T-cell (primary cell): ENCODE measurements at regions of chr13 and their contacts with region 1.

Region 1: GRCh38 chr13:99288089-99288488 is 19.1 kb downstream of the GPR183 start:
- DNase-seq: peak in 1 of 35 experiments; percentile 36
- ATAC-seq: no peak
- H3K4me3 ChIP-seq: no peak overlapping the region
- H3K4me3 Mint-ChIP-seq: peak overlapping the region in 1 of 3 donors; percentile 20
- H3K27ac ChIP-seq: peak overlapping the region; percentile 52
- H3K27ac Mint-ChIP-seq: peak overlapping the region; percentile 89
- H3K4me1 ChIP-seq: peaks cover 26 to 67% of the 10 kb centered on the region in 2 experiments
- H3K4me1 Mint-ChIP-seq: peaks cover 90 to 97% (median 90%) of the 10 kb centered on the region in 3 donors
- H3K27me3 ChIP-seq: no peaks in the 10 kb centered on the region
- H3K27me3 Mint-ChIP-seq: no peaks in the 10 kb centered on the region

Region 2: GRCh38 chr13:99182439-99182838 is 105.7 kb before region 1 on chr13:
- CTCF ChIA-PET with region 1: interaction called in 1 of 2 experiments, 3 read pairs
- POLR2A ChIA-PET with region 1: interaction called in 1 of 2 experiments, 10 read pairs
- DNase-seq: no peak
- ATAC-seq: no peak
- H3K4me3 ChIP-seq: no peak overlapping the region
- H3K4me3 Mint-ChIP-seq: no peak overlapping the region
- H3K27ac ChIP-seq: no peak overlapping the region
- H3K27ac Mint-ChIP-seq: no peak overlapping the region
- H3K4me1 ChIP-seq: peaks cover 16 to 30% of the 10 kb centered on the region in 2 experiments
- H3K4me1 Mint-ChIP-seq: peaks cover 30 to 33% (median 31%) of the 10 kb centered on the region in 3 donors
- H3K27me3 ChIP-seq: no peaks in the 10 kb centered on the region
- H3K27me3 Mint-ChIP-seq: no peaks in the 10 kb centered on the region

Region 3: GRCh38 chr13:99341969-99342722 is 54.1 kb after region 1 on chr13:
- CTCF ChIA-PET with region 1: interaction called in 1 of 2 experiments, 6 read pairs
- POLR2A ChIA-PET with region 1: interaction called in 1 of 2 experiments, 22 read pairs
- DNase-seq: no peak
- ATAC-seq: no peak
- H3K4me3 ChIP-seq: no peak overlapping the region
- H3K4me3 Mint-ChIP-seq: peak overlapping the region in 1 of 3 donors; percentile 67
- H3K27ac ChIP-seq: no peak overlapping the region
- H3K27ac Mint-ChIP-seq: peak overlapping the region; percentile 93 to 99
- H3K4me1 ChIP-seq: peaks cover 13 to 67% of the 10 kb centered on the region in 2 experiments
- H3K4me1 Mint-ChIP-seq: peaks cover 70 to 91% (median 91%) of the 10 kb centered on the region in 3 donors
- H3K27me3 ChIP-seq: no peaks in the 10 kb centered on the region
- H3K27me3 Mint-ChIP-seq: no peaks in the 10 kb centered on the region